MCF 10A (cell line): ENCODE measurements at regions of chr1 and their contacts with region 1.

Region 1: GRCh38 chr1:31639543-31639942 is 5.1 kb downstream of the PEF1 start:
- DNase-seq: peak; percentile 70
- H3K4me3 Mint-ChIP-seq: no peak overlapping the region
- H3K27ac Mint-ChIP-seq: no peak overlapping the region
- H3K4me1 Mint-ChIP-seq: peaks cover 19% of the 10 kb centered on the region
- H3K27me3 Mint-ChIP-seq: no peaks in the 10 kb centered on the region
- CTCF ChIP-seq: no peak

Region 2: DNA sequence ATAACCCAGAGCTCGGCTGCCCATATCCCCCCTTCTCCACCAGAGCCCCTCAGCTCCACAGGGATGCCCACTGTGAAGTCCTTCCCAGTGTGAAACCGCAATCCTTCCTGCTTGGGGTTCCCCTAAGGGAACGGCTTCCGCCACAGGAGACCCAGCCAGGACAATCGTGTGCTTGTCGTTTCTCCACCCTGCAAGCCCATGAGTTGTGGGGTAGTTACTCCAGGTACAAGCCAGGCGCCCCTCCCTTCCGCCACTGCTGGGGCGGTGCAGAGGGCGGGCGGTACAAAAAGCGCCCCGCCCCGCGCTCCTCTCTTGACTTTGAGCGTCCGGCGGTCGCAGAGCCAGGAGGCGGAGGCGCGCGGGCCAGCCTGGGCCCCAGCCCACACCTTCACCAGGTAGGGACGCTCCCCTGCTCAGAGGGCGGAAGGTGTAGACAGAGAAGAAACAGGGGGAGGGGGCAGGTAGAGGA is 63.3 kb before region 1 on chr1 and contains the start of gene TINAGL1:
- CTCF ChIA-PET with region 1: interaction called, 3 read pairs
- POLR2A ChIA-PET with region 1: interaction called, 62 read pairs
- intact Hi-C with region 1: no loop called
- DNase-seq: peak; percentile 80
- H3K4me3 Mint-ChIP-seq: no peak within 1 kb of the TSS
- H3K27ac Mint-ChIP-seq: no peak within 1 kb of the TSS
- H3K4me1 Mint-ChIP-seq: peaks cover 54% of the 10 kb centered on the region
- H3K27me3 Mint-ChIP-seq: no peaks in the 10 kb centered on the region
- CTCF ChIP-seq: no peak
- total RNA-seq, gene TINAGL1: 2.7 and 2.9 TPM in 2 replicates